PC-9 (cell line): ENCODE measurements at regions of chr10 and their contacts with region 1.

Region 1: DNA sequence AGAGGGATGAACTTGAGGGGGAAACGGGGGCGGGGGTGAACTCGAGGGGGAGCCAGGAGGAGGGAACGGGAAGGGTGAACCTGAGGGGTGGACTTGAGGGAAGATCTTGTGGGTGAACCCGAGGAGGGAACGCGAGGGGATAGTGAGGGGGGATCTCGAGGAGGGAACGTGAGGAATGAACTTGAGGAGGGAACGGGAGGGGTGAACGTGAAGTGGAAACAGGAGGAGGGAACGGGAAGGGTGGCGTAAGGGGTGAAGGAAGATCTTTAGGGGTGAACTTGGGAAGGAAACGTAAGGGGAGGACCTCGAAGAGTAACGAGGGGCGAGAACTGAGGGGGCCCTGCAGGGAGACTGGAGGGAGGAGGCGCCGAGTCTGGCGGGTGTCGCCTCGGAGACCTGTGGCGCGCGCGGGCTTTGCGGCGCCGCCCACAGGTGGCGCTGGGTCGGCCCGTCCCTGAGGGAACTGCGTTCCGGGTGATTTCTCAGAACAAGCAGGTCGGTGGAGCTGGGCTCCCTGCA is 651 bp downstream of the MYO3A start:
- DNase-seq: no peak
- H3K4me3 ChIP-seq: no peak overlapping the region
- H3K27ac ChIP-seq: no peak overlapping the region
- H3K4me1 ChIP-seq: no peaks in the 10 kb centered on the region
- H3K27me3 ChIP-seq: peaks cover 14% of the 10 kb centered on the region; the same call in 1 of the 2 replicates
- CTCF ChIP-seq: no peak

Region 2: GRCh38 chr10:25768167-25768566 is 166.5 kb before region 1 on chr10:
- CTCF ChIA-PET with region 1: no interaction called
- POLR2A ChIA-PET with region 1: no interaction called
- intact Hi-C with region 1: no loop called
- DNase-seq: no peak
- H3K4me3 ChIP-seq: no peak overlapping the region
- H3K27ac ChIP-seq: no peak overlapping the region
- H3K4me1 ChIP-seq: no peaks in the 10 kb centered on the region
- H3K27me3 ChIP-seq: peaks cover 13% of the 10 kb centered on the region
- CTCF ChIP-seq: 0 out of 2 replicates have a peak, but pooled peaks have one; percentile 13

Region 3: GRCh38 chr10:25999295-25999981 is 64.8 kb after region 1 on chr10:
- CTCF ChIA-PET with region 1: no interaction called
- POLR2A ChIA-PET with region 1: no interaction called
- intact Hi-C with region 1: loop called (anchors 10 kb)
- DNase-seq: no peak
- H3K4me3 ChIP-seq: no peak overlapping the region
- H3K27ac ChIP-seq: no peak overlapping the region
- H3K4me1 ChIP-seq: no peaks in the 10 kb centered on the region
- H3K27me3 ChIP-seq: no peaks in the 10 kb centered on the region
- CTCF ChIP-seq: no peak